PC-3 (cell line): ENCODE measurements at regions of chr11 and their contacts with region 1.

Region 1: GRCh38 chr11:73114110-73114824 is 27.9 kb downstream of the FCHSD2 start:
- DNase-seq: peak; percentile 88
- ATAC-seq: no peak
- H3K4me3 ChIP-seq: no peak overlapping the region
- H3K27ac ChIP-seq: peak overlapping the region; percentile 25
- H3K4me1 ChIP-seq: peaks cover 15% of the 10 kb centered on the region
- H3K27me3 ChIP-seq: no peaks in the 10 kb centered on the region
- CTCF ChIP-seq: no peak

Region 2: GRCh38 chr11:73155102-73155501 is 40.8 kb after region 1 on chr11:
- CTCF ChIA-PET with region 1: interaction called, 13 read pairs
- POLR2A ChIA-PET with region 1: no interaction called
- intact Hi-C with region 1: no loop called
- DNase-seq: no peak
- ATAC-seq: no peak
- H3K4me3 ChIP-seq: no peak overlapping the region
- H3K27ac ChIP-seq: no peak overlapping the region
- H3K4me1 ChIP-seq: no peaks in the 10 kb centered on the region
- H3K27me3 ChIP-seq: no peaks in the 10 kb centered on the region
- CTCF ChIP-seq: no peak